CD8-positive, alpha-beta T cell (primary cell): ENCODE measurements at regions of chr13 and their contacts with region 1.

Region 1: DNA sequence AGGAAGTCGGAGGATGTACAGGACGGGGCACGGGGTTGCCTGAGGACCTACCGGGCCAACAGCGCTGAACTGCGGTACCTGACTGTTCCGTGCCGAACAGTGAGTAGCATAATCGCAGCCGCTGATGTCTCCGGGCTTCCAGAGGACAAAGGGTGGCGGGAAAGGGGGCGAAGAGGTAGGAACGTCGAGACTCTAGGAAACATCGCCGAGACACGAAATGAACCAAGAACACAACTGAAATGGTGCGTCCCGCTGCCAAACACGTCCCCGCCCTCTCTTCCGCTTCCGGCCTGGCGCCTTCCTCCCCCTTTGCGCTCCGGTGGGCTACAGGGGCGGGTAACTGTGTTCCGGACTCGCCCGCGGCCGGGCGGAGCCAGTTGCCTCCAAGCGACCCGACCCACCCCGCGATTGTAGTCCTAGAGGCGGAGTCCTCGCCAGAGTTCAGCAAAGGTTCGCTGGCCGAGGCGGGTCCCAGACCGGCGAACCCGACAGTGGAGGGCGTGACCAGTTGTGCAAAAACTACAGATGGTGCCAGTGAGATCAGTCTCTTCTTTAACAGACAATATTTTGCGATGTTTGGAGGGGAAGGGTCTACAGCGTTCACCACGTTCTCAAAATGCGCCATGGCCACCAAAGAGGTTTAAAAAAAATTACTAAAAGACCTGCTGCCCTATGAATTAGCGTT is at the start of gene MRPS31:
- DNase-seq: peak; percentile 88 to 98 (median 95)
- ATAC-seq: peak; percentile 94
- H3K4me3 ChIP-seq: peak within 1 kb of the TSS; percentile 89 to 92
- H3K4me3 Mint-ChIP-seq: peak within 1 kb of the TSS; percentile 99
- H3K27ac ChIP-seq: peak within 1 kb of the TSS; percentile 74 to 87
- H3K27ac Mint-ChIP-seq: peak within 1 kb of the TSS; percentile 98
- H3K4me1 ChIP-seq: peaks cover 20% of the 10 kb centered on the region
- H3K4me1 Mint-ChIP-seq: peaks cover 41% of the 10 kb centered on the region
- H3K27me3 ChIP-seq: no peaks in the 10 kb centered on the region
- H3K27me3 Mint-ChIP-seq: no peaks in the 10 kb centered on the region
- CTCF ChIP-seq: no peak
- total RNA-seq, gene MRPS31: 7.3 to 7.5 TPM

Region 2: GRCh38 chr13:39037880-39038568 is 1733.1 kb before region 1 on chr13 and contains the starts of genes NHLRC3 and PROSER1:
- CTCF ChIA-PET with region 1: no interaction called
- POLR2A ChIA-PET with region 1: no interaction called
- intact Hi-C with region 1: loop called in 1 of 2 experiments (anchors 5 kb)
- DNase-seq: peak; percentile 76 to 95 (median 88)
- ATAC-seq: peak; percentile 89
- H3K4me3 ChIP-seq: peak within 1 kb of the TSS; percentile 66 to 93
- H3K4me3 Mint-ChIP-seq: peak within 1 kb of the TSS; percentile 94
- H3K27ac ChIP-seq: peak within 1 kb of the TSS; percentile 79 to 81
- H3K27ac Mint-ChIP-seq: peak within 1 kb of the TSS; percentile 99
- H3K4me1 ChIP-seq: peaks cover 30% of the 10 kb centered on the region
- H3K4me1 Mint-ChIP-seq: peaks cover 63% of the 10 kb centered on the region
- H3K27me3 ChIP-seq: no peaks in the 10 kb centered on the region
- H3K27me3 Mint-ChIP-seq: no peaks in the 10 kb centered on the region
- CTCF ChIP-seq: no peak
- total RNA-seq, gene NHLRC3: 8.2 to 9.3 TPM
- total RNA-seq, gene PROSER1: 51.8 to 52.4 TPM

Region 3: GRCh38 chr13:40564342-40565001 is 206.6 kb before region 1 on chr13:
- CTCF ChIA-PET with region 1: no interaction called
- POLR2A ChIA-PET with region 1: no interaction called
- intact Hi-C with region 1: no loop called
- DNase-seq: peak in 2 of 9 experiments; percentile 33 to 61
- ATAC-seq: peak; percentile 47
- H3K4me3 ChIP-seq: no peak overlapping the region
- H3K4me3 Mint-ChIP-seq: peak overlapping the region; percentile 58
- H3K27ac ChIP-seq: no peak overlapping the region
- H3K27ac Mint-ChIP-seq: peak overlapping the region; percentile 83
- H3K4me1 ChIP-seq: peaks cover 77% of the 10 kb centered on the region
- H3K4me1 Mint-ChIP-seq: peaks cover 87% of the 10 kb centered on the region
- H3K27me3 ChIP-seq: no peaks in the 10 kb centered on the region
- H3K27me3 Mint-ChIP-seq: no peaks in the 10 kb centered on the region
- CTCF ChIP-seq: no peak

Region 4: GRCh38 chr13:40732658-40733057 is 38.4 kb before region 1 on chr13:
- CTCF ChIA-PET with region 1: no interaction called
- POLR2A ChIA-PET with region 1: no interaction called
- intact Hi-C with region 1: loop called in 1 of 2 experiments (anchors 2 kb)
- DNase-seq: peak in 1 of 9 experiments; percentile 10
- ATAC-seq: no peak
- H3K4me3 ChIP-seq: no peak overlapping the region
- H3K4me3 Mint-ChIP-seq: no peak overlapping the region
- H3K27ac ChIP-seq: no peak overlapping the region
- H3K27ac Mint-ChIP-seq: peak overlapping the region; percentile 16
- H3K4me1 ChIP-seq: peaks cover 5% of the 10 kb centered on the region
- H3K4me1 Mint-ChIP-seq: peaks cover 28% of the 10 kb centered on the region
- H3K27me3 ChIP-seq: no peaks in the 10 kb centered on the region
- H3K27me3 Mint-ChIP-seq: no peaks in the 10 kb centered on the region
- CTCF ChIP-seq: no peak

Region 5: GRCh38 chr13:40922437-40923040 is 151.5 kb after region 1 on chr13:
- CTCF ChIA-PET with region 1: interaction called, 6 read pairs
- POLR2A ChIA-PET with region 1: interaction called, 6 read pairs
- intact Hi-C with region 1: loop called (anchors 2 kb)
- DNase-seq: peak in 2 of 9 experiments; percentile 17 to 30
- ATAC-seq: no peak
- H3K4me3 ChIP-seq: no peak overlapping the region
- H3K4me3 Mint-ChIP-seq: peak overlapping the region; percentile 59
- H3K27ac ChIP-seq: no peak overlapping the region
- H3K27ac Mint-ChIP-seq: peak overlapping the region; percentile 82
- H3K4me1 ChIP-seq: peaks cover 8% of the 10 kb centered on the region
- H3K4me1 Mint-ChIP-seq: peaks cover 27% of the 10 kb centered on the region
- H3K27me3 ChIP-seq: no peaks in the 10 kb centered on the region
- H3K27me3 Mint-ChIP-seq: no peaks in the 10 kb centered on the region
- CTCF ChIP-seq: no peak

Region 6: DNA sequence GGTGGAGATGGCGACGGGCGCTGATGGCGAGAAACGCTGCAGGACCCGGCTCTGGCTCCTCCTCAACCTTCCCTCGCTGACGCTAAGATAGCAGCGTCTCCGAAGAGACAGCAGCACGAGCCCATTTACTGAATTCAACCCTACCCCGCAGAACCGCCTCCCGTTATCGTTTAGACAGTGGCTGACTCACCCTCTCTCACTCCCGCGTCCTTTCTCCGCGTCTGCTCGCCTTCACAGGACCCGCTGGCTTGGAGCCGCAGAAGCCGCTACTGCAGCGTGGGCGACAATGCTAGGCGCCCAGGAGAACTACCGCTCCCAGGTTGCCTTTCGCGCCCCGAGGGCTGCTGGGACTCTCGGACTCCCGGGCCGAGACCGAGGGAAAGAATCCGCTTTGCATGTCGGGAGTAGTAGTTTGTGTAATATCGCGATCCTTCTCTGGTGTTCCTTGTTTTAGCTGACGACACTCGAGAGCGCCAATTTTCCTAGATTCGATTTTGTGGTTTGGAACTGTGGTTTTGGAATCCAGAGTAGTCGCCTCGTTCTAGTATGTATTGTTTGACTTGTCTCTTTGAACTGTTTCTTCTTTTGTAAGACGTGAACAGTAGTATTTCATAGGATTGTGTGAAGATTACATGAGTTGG is 361.6 kb after region 1 on chr13 and contains the start of gene KBTBD6:
- CTCF ChIA-PET with region 1: no interaction called
- POLR2A ChIA-PET with region 1: no interaction called
- intact Hi-C with region 1: loop called in 1 of 2 experiments (anchors 10 kb)
- DNase-seq: peak; percentile 80 to 96 (median 90)
- ATAC-seq: peak; percentile 95
- H3K4me3 ChIP-seq: peak within 1 kb of the TSS; percentile 70 to 80
- H3K4me3 Mint-ChIP-seq: peak within 1 kb of the TSS; percentile 95
- H3K27ac ChIP-seq: peak within 1 kb of the TSS; percentile 48 to 64
- H3K27ac Mint-ChIP-seq: peak within 1 kb of the TSS; percentile 93
- H3K4me1 ChIP-seq: peaks cover 43% of the 10 kb centered on the region
- H3K4me1 Mint-ChIP-seq: peaks cover 55% of the 10 kb centered on the region
- H3K27me3 ChIP-seq: no peaks in the 10 kb centered on the region
- H3K27me3 Mint-ChIP-seq: no peaks in the 10 kb centered on the region
- CTCF ChIP-seq: no peak
- total RNA-seq, gene KBTBD6: 2.2 to 2.3 TPM

Region 7: GRCh38 chr13:41263261-41264027 is 492.4 kb after region 1 on chr13 and contains the start of gene MTRF1:
- CTCF ChIA-PET with region 1: no interaction called
- POLR2A ChIA-PET with region 1: no interaction called
- intact Hi-C with region 1: loop called in 1 of 2 experiments (anchors 5 kb)
- DNase-seq: peak; percentile 65 to 91 (median 82)
- ATAC-seq: peak; percentile 90
- H3K4me3 ChIP-seq: peak within 1 kb of the TSS; percentile 68 to 72
- H3K4me3 Mint-ChIP-seq: peak within 1 kb of the TSS; percentile 99
- H3K27ac ChIP-seq: peak within 1 kb of the TSS; percentile 73 to 84
- H3K27ac Mint-ChIP-seq: peak within 1 kb of the TSS; percentile 99
- H3K4me1 ChIP-seq: peaks cover 26% of the 10 kb centered on the region
- H3K4me1 Mint-ChIP-seq: peaks cover 40% of the 10 kb centered on the region
- H3K27me3 ChIP-seq: no peaks in the 10 kb centered on the region
- H3K27me3 Mint-ChIP-seq: no peaks in the 10 kb centered on the region
- CTCF ChIP-seq: no peak
- total RNA-seq, gene MTRF1: 26.2 to 26.9 TPM

Region 8: GRCh38 chr13:42271337-42272114 is 1500.5 kb after region 1 on chr13:
- CTCF ChIA-PET with region 1: no interaction called
- POLR2A ChIA-PET with region 1: no interaction called
- intact Hi-C with region 1: loop called (anchors 5 to 10 kb)
- DNase-seq: peak; percentile 83 to 99 (median 91)
- ATAC-seq: peak; percentile 86
- H3K4me3 ChIP-seq: peak overlapping the region; percentile 63 to 78
- H3K4me3 Mint-ChIP-seq: peak overlapping the region; percentile 97
- H3K27ac ChIP-seq: peak overlapping the region; percentile 89 to 94
- H3K27ac Mint-ChIP-seq: peak overlapping the region; percentile 96
- H3K4me1 ChIP-seq: peaks cover 31% of the 10 kb centered on the region
- H3K4me1 Mint-ChIP-seq: peaks cover 49% of the 10 kb centered on the region
- H3K27me3 ChIP-seq: no peaks in the 10 kb centered on the region
- H3K27me3 Mint-ChIP-seq: no peaks in the 10 kb centered on the region
- CTCF ChIP-seq: no peak